ENCODE measurements at regions of chr4 and their contacts with region 1.

Region 1: DNA sequence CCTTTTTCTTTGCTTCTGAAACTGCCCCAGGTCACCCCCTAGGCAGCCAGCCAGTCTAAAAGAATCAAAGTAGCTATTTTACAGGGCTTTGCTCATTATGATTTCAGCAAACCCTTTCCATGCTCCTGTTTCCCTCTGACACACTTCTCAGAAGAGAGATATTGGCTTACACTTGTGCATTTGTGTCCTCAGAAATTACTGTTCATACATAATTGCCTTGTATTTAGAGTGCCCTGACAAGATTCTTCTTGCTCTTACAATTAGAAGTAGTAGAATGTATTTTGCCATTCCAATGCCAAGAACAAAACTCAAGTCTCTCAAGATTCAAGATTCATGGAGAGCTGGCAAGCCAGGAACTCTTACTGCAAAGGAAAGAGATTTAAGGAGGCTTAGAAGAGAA is 531.0 kb upstream of the ZFP42 start:
- DNase-seq: no peak
- H3K4me3 ChIP-seq: no peak overlapping the region
- CTCF ChIP-seq: no peak
- POLR2A ChIP-seq: no peak

Region 2: GRCh38 chr4:189232274-189232673 is 1767.7 kb after region 1 on chr4:
- intact Hi-C with region 1: loop called (anchors 5 kb)
- DNase-seq: no peak
- H3K4me3 ChIP-seq: no peak overlapping the region
- CTCF ChIP-seq: no peak
- POLR2A ChIP-seq: no peak